ENCODE measurements at regions of chr6 and their contacts with region 1.

Region 1: DNA sequence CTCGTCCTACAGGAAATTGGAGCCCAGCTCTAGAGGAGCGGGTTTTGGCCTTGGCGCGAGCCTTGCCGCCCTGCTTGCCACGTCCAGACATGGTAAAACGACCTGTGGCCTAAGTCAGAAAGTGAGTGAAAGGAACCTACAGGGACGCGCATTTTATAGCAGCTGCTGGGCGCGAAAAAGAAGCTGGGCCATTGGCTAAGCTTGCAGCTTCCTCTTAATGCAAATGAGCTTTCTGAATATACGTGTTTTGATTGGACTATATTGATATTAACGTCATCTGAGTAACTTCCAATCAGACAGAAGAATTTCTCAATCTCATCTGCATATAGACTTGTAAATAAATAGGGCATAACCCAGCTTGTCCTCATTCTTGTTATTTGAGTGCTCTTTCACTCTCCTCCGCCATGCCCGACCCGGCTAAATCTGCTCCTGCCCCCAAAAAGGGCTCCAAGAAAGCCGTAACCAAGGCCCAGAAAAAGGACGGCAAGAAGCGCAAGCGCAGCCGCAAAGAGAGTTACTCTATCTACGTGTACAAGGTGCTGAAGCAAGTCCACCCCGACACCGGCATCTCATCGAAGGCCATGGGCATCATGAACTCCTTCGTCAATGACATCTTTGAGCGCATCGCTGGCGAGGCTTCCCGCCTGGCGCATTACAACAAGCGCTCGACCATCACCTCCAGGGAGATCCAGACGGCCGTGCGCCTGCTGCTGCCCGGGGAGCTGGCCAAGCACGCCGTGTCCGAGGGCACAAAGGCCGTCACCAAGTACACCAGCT is 18.9 kb downstream of the OR2B2 start:
- DNase-seq: peak; percentile 97 to 99 (median 98)
- H3K4me3 ChIP-seq: peak overlapping the region; percentile 78 to 100 (median 96)
- H3K27ac ChIP-seq: peak overlapping the region; percentile 46 to 85
- H3K4me1 ChIP-seq: peaks cover 7 to 53% (median 29%) of the 10 kb centered on the region in 4 experiments
- H3K27me3 ChIP-seq: no peaks in the 10 kb centered on the region

Region 2: GRCh38 chr6:27132532-27133280 is 760.5 kb before region 1 on chr6:
- CTCF ChIA-PET with region 1: interaction called, 3 read pairs
- POLR2A ChIA-PET with region 1: interaction called, 10 read pairs
- DNase-seq: peak; percentile 100
- H3K4me3 ChIP-seq: peak overlapping the region; percentile 68 to 92 (median 84)
- H3K27ac ChIP-seq: peak overlapping the region; percentile 50 to 90
- H3K4me1 ChIP-seq: peaks cover 11 to 72% (median 43%) of the 10 kb centered on the region in 4 experiments
- H3K27me3 ChIP-seq: no peaks in the 10 kb centered on the region

Region 3: DNA sequence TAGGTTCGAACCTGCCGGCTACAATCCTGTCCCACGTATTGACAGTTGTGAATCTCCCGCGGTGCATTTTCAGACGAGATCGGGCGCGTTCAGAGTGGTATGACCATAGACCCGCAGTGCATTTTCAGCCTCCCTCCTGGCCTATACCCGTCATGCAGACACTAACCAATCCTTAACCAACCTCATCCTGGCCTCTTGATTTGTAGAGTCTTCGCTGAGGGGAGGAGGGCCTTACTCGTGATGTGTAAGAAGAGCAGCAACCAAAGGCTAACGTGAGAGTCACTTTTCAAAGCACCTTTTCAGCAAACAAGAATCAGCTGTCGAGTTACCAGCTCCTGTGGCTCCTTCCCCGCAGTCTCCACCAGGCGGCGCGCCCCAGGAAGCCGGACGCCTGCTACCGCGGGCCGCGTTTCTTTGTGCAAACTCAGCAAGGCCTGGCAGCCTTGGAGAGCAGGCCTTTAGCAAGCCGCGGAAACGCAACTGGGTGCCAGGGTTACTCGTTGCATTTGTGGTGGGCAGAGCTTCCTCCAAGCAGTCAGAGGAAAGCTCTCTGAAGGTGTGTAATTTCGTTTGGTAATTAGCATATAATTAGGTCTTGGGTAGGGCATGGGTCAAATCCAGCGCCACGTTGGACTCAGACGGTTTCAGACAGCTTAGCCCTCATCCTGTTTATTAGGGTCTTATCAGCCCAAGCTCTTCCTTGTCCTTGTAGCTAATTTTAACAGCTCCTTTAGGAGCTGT is 120.8 kb before region 1 on chr6:
- CTCF ChIA-PET with region 1: interaction called, 21 read pairs
- POLR2A ChIA-PET with region 1: interaction called, 4 read pairs
- DNase-seq: peak; percentile 91 to 97 (median 94)
- H3K4me3 ChIP-seq: peak overlapping the region in 2 of 7 experiments; percentile 10 to 31
- H3K27ac ChIP-seq: peak overlapping the region in 1 of 2 experiments; percentile 80
- H3K4me1 ChIP-seq: peaks cover 2 to 36% (median 27%) of the 10 kb centered on the region in 4 experiments
- H3K27me3 ChIP-seq: no peaks in the 10 kb centered on the region

Region 4: GRCh38 chr6:27809939-27810767 is 83.1 kb before region 1 on chr6:
- CTCF ChIA-PET with region 1: interaction called, 77 read pairs
- POLR2A ChIA-PET with region 1: interaction called, 22 read pairs
- DNase-seq: peak; percentile 96 to 98 (median 98)
- H3K4me3 ChIP-seq: peak overlapping the region; percentile 73 to 94 (median 85)
- H3K27ac ChIP-seq: peak overlapping the region; percentile 74 to 89
- H3K4me1 ChIP-seq: peaks cover 27 to 67% (median 48%) of the 10 kb centered on the region in 4 experiments
- H3K27me3 ChIP-seq: no peaks in the 10 kb centered on the region

Region 5: GRCh38 chr6:27825025-27825793 is 68.0 kb before region 1 on chr6:
- CTCF ChIA-PET with region 1: interaction called, 121 read pairs
- POLR2A ChIA-PET with region 1: interaction called, 58 read pairs
- DNase-seq: no peak
- H3K4me3 ChIP-seq: peak overlapping the region; percentile 47 to 95 (median 78)
- H3K27ac ChIP-seq: peak overlapping the region; percentile 37 to 87
- H3K4me1 ChIP-seq: peaks cover 10 to 28% (median 23%) of the 10 kb centered on the region in 4 experiments
- H3K27me3 ChIP-seq: no peaks in the 10 kb centered on the region

Region 6: GRCh38 chr6:27864906-27865849 is 28.1 kb before region 1 on chr6:
- CTCF ChIA-PET with region 1: interaction called, 191 read pairs
- POLR2A ChIA-PET with region 1: interaction called, 209 read pairs
- DNase-seq: peak; percentile 99
- H3K4me3 ChIP-seq: peak overlapping the region; percentile 72 to 93 (median 82)
- H3K27ac ChIP-seq: peak overlapping the region; percentile 65 to 80
- H3K4me1 ChIP-seq: peaks cover 16 to 55% (median 35%) of the 10 kb centered on the region in 4 experiments
- H3K27me3 ChIP-seq: no peaks in the 10 kb centered on the region

Region 7: DNA sequence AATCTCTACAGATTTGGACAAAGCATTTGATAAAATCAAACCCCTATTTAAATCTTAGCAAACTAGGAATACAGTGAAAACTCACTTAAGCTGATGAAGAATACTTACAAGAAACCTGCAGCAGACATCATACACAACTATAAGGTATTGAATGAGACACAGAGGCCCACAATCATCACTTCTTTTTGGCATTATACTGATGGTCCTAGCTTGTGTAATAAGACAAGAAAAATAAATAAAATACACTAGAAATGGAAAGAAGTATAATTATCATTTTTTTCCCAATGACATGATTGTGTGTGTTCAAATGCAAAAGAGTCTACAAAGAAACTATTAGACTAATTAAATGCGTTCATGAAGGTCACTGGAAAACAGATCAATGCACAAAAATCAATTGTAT is 55.0 kb after region 1 on chr6:
- CTCF ChIA-PET with region 1: no interaction called
- POLR2A ChIA-PET with region 1: no interaction called
- DNase-seq: no peak
- H3K4me3 ChIP-seq: no peak overlapping the region
- H3K27ac ChIP-seq: no peak overlapping the region
- H3K4me1 ChIP-seq: no peaks in the 10 kb centered on the region
- H3K27me3 ChIP-seq: peaks cover 0 to 8% (median 0%) of the 10 kb centered on the region in 5 experiments